ENCODE measurements at regions of chr17 and their contacts with region 1.

Region 1: GRCh38 chr17:17812211-17813057 is 24.4 kb downstream of the SREBF1 start:
- DNase-seq: peak; percentile 74
- ATAC-seq: peak; percentile 59
- H3K4me3 Mint-ChIP-seq: no peak overlapping the region
- H3K27ac Mint-ChIP-seq: peak overlapping the region; percentile 75
- H3K4me1 Mint-ChIP-seq: peaks cover 22% of the 10 kb centered on the region
- H3K27me3 Mint-ChIP-seq: no peaks in the 10 kb centered on the region
- CTCF ChIP-seq: peak; percentile 99

Region 2: DNA sequence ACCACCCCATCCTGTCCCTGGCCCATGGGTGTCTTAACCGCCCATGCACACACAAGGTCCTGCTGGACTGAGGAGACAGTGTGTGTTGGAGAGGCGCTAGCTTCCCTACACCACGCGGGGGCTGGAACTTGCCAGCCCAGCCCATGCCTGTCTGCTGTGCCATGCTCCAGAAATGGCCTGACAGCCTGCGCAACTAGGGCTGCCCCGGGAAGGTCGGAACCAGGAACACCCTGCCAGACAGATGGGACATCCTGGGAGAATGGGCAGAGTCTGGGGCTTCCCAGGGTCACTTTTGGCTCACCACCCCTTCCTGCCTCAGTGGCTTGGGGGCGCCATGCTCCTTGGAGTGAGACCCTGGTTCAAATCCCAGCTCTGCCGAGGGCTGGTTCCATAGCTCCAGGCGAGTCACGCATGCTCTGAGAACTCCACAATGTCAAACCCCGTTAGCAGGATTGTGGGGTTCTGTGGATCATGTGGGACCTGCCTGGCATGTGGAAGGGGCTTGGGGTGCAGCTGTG is 11.9 kb before region 1 on chr17:
- CTCF ChIA-PET with region 1: interaction called, 17 read pairs
- POLR2A ChIA-PET with region 1: interaction called, 6 read pairs
- intact Hi-C with region 1: no loop called
- DNase-seq: no peak
- ATAC-seq: no peak
- H3K4me3 Mint-ChIP-seq: no peak overlapping the region
- H3K27ac Mint-ChIP-seq: no peak overlapping the region
- H3K4me1 Mint-ChIP-seq: no peaks in the 10 kb centered on the region
- H3K27me3 Mint-ChIP-seq: no peaks in the 10 kb centered on the region
- CTCF ChIP-seq: no peak

Region 3: DNA sequence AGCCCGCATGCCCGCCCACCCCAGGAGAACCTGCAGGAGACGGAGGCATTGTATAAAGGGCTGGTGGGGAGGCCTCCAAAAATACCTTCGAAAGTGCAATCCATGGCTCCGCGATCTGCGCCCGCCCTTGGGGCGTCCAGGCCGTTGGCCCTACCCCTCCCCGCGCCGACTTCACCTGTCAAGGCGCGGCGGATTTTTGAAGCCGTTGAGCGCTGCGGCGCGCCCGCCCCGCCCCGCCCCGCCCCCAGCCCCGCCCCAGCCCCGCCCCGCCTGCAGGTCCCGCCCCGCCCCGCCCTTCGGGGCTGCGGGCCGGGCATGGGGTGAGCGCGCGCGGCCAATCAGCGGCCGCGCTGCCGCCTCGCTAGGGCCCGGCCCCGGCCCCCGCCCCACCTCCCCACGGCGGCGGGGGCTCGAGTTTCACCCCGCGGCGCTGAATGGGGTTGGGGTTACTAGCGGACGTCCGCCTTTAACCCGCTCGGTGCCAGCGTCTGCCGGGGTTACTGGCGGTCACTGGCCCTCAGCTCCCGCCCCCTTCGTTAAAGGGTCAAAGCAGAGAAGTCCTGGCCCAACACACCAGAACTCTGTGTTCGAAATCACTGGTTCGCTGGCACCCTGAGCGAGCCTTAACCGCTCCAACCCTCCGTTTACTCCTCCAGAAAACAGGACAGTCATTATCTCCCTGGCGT is 11.1 kb after region 1 on chr17:
- CTCF ChIA-PET with region 1: interaction called, 15 read pairs
- POLR2A ChIA-PET with region 1: interaction called, 272 read pairs
- intact Hi-C with region 1: no loop called
- DNase-seq: peak; percentile 86
- ATAC-seq: peak; percentile 77
- H3K4me3 Mint-ChIP-seq: peak overlapping the region; percentile 75
- H3K27ac Mint-ChIP-seq: peak overlapping the region; percentile 97
- H3K4me1 Mint-ChIP-seq: peaks cover 95% of the 10 kb centered on the region
- H3K27me3 Mint-ChIP-seq: no peaks in the 10 kb centered on the region
- CTCF ChIP-seq: no peak

Region 4: GRCh38 chr17:17836250-17836817 is 23.9 kb after region 1 on chr17:
- CTCF ChIA-PET with region 1: interaction called, 19 read pairs
- POLR2A ChIA-PET with region 1: interaction called, 272 read pairs
- intact Hi-C with region 1: no loop called
- DNase-seq: peak; percentile 98
- ATAC-seq: peak; percentile 72
- H3K4me3 Mint-ChIP-seq: peak overlapping the region; percentile 92
- H3K27ac Mint-ChIP-seq: peak overlapping the region; percentile 96
- H3K4me1 Mint-ChIP-seq: peaks cover 69% of the 10 kb centered on the region
- H3K27me3 Mint-ChIP-seq: no peaks in the 10 kb centered on the region
- CTCF ChIP-seq: no peak